ENCODE measurements at regions of chr10 and their contacts with region 1.

Region 1: DNA sequence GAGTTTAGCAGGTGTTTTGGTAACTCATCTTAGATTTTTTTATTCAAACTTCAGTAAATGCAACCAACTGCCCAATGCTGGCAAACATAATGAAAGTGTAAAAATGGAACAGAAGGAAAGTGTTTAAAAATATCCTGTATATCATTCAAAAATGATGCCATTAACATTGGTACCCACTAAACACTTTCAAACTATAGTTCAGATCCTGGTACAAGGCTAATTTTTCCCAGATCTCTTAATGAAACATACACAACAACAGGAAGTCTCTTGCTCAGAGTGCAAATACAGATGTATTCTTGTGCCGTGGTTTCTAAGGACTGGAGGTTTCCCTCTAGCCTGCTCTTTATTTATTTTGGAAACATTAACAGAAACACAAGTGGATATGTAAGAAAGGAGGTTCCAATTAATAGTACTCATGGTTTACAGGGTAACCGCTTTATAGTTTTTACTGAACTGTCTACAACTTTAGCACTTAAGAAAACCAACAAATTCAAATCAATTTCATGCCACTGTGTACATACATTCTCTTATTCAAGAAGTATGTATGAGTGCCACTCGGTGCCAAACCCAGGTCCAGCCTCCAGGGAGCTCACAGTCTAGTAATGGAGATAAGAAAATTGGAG is 176.0 kb upstream of the AKR1E2 start:
- DNase-seq: peak in 1 of 5 donors; percentile 47
- ATAC-seq: peak; percentile 22 to 77 (median 60)
- H3K4me3 ChIP-seq: no peak overlapping the region
- H3K27ac ChIP-seq: peak overlapping the region; percentile 3 to 76 (median 55)
- H3K4me1 ChIP-seq: peaks cover 0 to 47% (median 33%) of the 10 kb centered on the region in 12 donors
- H3K27me3 ChIP-seq: no peaks in the 10 kb centered on the region
- CTCF ChIP-seq: no peak
- POLR2A ChIP-seq: no peak

Region 2: DNA sequence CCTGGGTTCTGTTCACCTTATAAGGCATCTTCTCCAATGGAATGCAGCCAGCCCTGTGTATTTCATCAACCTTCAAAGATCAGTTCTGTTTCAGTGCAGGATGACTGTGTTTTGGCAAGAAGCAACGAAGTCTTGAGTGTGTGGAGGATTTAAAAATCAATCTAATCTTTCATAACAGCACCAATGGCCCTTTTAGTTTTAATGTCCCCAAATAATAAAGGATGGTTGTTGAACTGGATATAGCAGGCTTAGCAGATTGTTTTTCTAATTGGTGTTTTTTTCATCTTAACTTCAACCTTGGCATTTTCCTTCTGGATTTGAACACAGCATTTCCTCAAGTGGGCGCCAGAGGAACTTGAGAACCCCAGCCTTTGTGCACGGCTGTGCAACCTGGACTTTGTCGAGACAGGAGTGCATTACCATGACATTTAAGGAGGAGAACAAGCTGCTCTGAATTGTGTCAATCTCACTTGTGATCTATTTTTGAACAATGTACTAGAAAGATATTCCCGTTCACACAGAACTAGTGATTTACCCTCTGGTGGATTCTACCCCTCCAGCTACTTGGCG is 137.2 kb before region 1 on chr10:
- intact Hi-C with region 1: loop called in 6 of 10 experiments (anchors 5 to 10 kb)
- DNase-seq: peak; percentile 51 to 79 (median 69)
- ATAC-seq: peak; percentile 79 to 91 (median 88)
- H3K4me3 ChIP-seq: no peak overlapping the region
- H3K27ac ChIP-seq: peak overlapping the region; percentile 10 to 85 (median 70)
- H3K4me1 ChIP-seq: peaks cover 5 to 48% (median 30%) of the 10 kb centered on the region in 12 donors
- H3K27me3 ChIP-seq: no peaks in the 10 kb centered on the region
- CTCF ChIP-seq: peak; percentile 36 to 68 (median 54)
- POLR2A ChIP-seq: no peak

Region 3: DNA sequence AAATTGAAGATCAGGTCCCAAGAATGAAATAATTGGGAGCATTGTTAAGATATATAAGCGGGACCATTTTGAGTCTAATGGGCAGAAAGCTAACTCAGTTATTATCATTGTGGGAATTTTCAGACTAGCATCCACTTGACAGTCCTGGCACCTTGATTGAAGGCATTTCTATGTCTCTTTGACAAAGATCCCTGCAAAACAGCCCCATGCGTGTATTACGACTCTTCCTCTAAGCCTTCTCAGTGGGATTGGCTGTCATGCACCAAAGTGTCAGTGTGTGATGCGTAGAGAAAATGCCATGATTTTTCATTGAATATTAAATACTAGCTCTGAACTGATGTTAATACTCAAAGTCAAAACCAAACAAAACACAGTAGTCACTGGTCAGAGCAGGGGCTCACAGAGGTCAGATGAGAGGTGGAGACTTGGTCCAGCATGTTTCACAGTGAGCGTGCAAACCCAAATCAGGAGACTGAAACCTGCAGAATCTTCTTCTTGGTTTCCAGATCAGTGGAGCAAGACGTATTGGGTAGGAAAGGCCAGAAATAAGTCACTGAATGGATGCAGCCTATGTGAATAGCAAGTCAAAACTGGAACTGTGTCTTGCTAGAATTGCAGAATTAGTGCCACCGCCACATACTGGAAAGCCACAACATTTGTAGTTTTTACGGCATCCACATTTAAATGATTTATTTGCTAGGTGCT is 127.5 kb before region 1 on chr10:
- intact Hi-C with region 1: loop called in 3 of 10 experiments (anchors 10 kb)
- DNase-seq: no peak
- ATAC-seq: no peak
- H3K4me3 ChIP-seq: no peak overlapping the region
- H3K27ac ChIP-seq: no peak overlapping the region
- H3K4me1 ChIP-seq: peaks cover 0 to 21% (median 1%) of the 10 kb centered on the region in 12 donors
- H3K27me3 ChIP-seq: no peaks in the 10 kb centered on the region
- CTCF ChIP-seq: no peak
- POLR2A ChIP-seq: no peak

Region 4: DNA sequence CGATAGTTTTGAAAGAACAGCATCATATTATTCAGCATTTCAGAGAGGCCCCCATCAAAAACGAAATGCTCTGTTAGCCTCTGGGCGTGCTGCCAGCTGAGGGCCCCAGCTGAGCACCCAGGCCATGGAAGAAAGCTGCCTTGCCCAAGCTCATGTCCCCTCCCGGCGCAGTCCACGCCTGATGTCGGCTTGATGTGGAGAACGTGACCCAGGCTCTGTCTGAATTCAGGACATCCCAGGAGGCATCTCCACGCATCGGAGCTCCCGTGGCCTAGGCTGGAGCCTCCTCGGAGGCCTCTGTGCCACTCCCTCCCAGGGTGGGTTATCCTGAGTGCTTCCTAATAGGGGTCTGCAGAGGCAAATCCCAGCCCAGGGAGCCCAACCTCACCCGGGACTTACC is 42.3 kb before region 1 on chr10:
- intact Hi-C with region 1: no loop called
- DNase-seq: no peak
- ATAC-seq: no peak
- H3K4me3 ChIP-seq: no peak overlapping the region
- H3K27ac ChIP-seq: no peak overlapping the region
- H3K4me1 ChIP-seq: no peaks in the 10 kb centered on the region
- H3K27me3 ChIP-seq: no peaks in the 10 kb centered on the region
- CTCF ChIP-seq: no peak
- POLR2A ChIP-seq: no peak